CD14-positive monocyte (primary cell): ENCODE measurements at regions of chr20 and their contacts with region 1.

Region 1: GRCh38 chr20:44598423-44599305 is 16.3 kb downstream of the PKIG start:
- DNase-seq: peak; percentile 27 to 58 (median 48)
- H3K4me3 ChIP-seq: peak overlapping the region in 1 of 3 experiments; percentile 56
- H3K4me3 Mint-ChIP-seq: peak overlapping the region; percentile 59 to 81
- H3K27ac ChIP-seq: peak overlapping the region; percentile 63 to 80
- H3K27ac Mint-ChIP-seq: peak overlapping the region; percentile 82 to 91 (median 84)
- H3K4me1 ChIP-seq: peaks cover 54 to 63% of the 10 kb centered on the region in 2 donors
- H3K4me1 Mint-ChIP-seq: peaks cover 71% of the 10 kb centered on the region
- H3K27me3 ChIP-seq: no peaks in the 10 kb centered on the region
- H3K27me3 Mint-ChIP-seq: peaks cover 0 to 1% (median 0%) of the 10 kb centered on the region in 3 donors
- CTCF ChIP-seq: peak; percentile 32

Region 2: GRCh38 chr20:44532259-44532980 is 66.2 kb before region 1 on chr20:
- intact Hi-C with region 1: loop called in 1 of 2 experiments (anchors 5 kb)
- DNase-seq: no peak
- H3K4me3 ChIP-seq: peak overlapping the region; percentile 21 to 82 (median 51)
- H3K4me3 Mint-ChIP-seq: no peak overlapping the region
- H3K27ac ChIP-seq: peak overlapping the region in 1 of 2 donors; percentile 45
- H3K27ac Mint-ChIP-seq: no peak overlapping the region
- H3K4me1 ChIP-seq: peaks cover 22 to 29% of the 10 kb centered on the region in 2 donors
- H3K4me1 Mint-ChIP-seq: peaks cover 16% of the 10 kb centered on the region
- H3K27me3 ChIP-seq: no peaks in the 10 kb centered on the region
- H3K27me3 Mint-ChIP-seq: peaks cover 0 to 6% (median 0%) of the 10 kb centered on the region in 3 donors
- CTCF ChIP-seq: no peak

Region 3: GRCh38 chr20:44540834-44541233 is 57.8 kb before region 1 on chr20:
- intact Hi-C with region 1: loop called in 1 of 2 experiments (anchors 10 kb)
- DNase-seq: no peak
- H3K4me3 ChIP-seq: no peak overlapping the region
- H3K4me3 Mint-ChIP-seq: no peak overlapping the region
- H3K27ac ChIP-seq: no peak overlapping the region
- H3K27ac Mint-ChIP-seq: no peak overlapping the region
- H3K4me1 ChIP-seq: peaks cover 10 to 11% of the 10 kb centered on the region in 2 donors
- H3K4me1 Mint-ChIP-seq: peaks cover 19% of the 10 kb centered on the region
- H3K27me3 ChIP-seq: no peaks in the 10 kb centered on the region
- H3K27me3 Mint-ChIP-seq: peaks cover 0 to 1% (median 0%) of the 10 kb centered on the region in 3 donors
- CTCF ChIP-seq: no peak

Region 4: GRCh38 chr20:44678242-44678641 is 79.6 kb after region 1 on chr20:
- intact Hi-C with region 1: no loop called
- DNase-seq: no peak
- H3K4me3 ChIP-seq: no peak overlapping the region
- H3K4me3 Mint-ChIP-seq: no peak overlapping the region
- H3K27ac ChIP-seq: no peak overlapping the region
- H3K27ac Mint-ChIP-seq: peak overlapping the region in 1 of 7 donors; percentile 52
- H3K4me1 ChIP-seq: no peaks in the 10 kb centered on the region
- H3K4me1 Mint-ChIP-seq: no peaks in the 10 kb centered on the region
- H3K27me3 ChIP-seq: no peaks in the 10 kb centered on the region
- H3K27me3 Mint-ChIP-seq: peaks cover 0 to 5% (median 3%) of the 10 kb centered on the region in 3 donors
- CTCF ChIP-seq: no peak